A673 (cell line): ENCODE measurements at regions of chr3 and their contacts with region 1.

Region 1: DNA sequence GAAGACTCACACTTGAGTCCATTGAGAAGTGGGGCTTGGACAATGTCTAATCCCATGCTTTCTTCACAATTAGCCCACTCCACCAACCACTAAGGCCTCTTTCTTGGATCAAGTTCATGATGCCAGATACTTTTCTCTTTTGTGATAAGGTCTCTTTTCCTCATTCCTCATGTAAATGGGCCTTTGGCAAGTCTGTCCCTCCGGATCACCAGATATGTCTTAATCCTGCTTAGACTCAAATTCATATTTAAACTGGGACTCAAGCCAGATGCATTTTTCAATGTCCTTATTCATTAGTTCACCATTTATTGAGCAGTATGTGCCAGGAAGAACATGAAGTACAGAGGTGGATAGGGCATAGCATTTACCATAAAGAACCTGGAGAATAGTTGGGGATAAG is 671.1 kb downstream of the TBL1XR1 start:
- DNase-seq: peak; percentile 22
- H3K4me3 ChIP-seq: no peak overlapping the region
- H3K27ac ChIP-seq: no peak overlapping the region
- H3K4me1 ChIP-seq: peaks cover 12% of the 10 kb centered on the region
- H3K27me3 ChIP-seq: no peaks in the 10 kb centered on the region
- CTCF ChIP-seq: no peak

Region 2: GRCh38 chr3:176650478-176650877 is 124.3 kb after region 1 on chr3:
- CTCF ChIA-PET with region 1: interaction called, 12 read pairs
- POLR2A ChIA-PET with region 1: no interaction called
- intact Hi-C with region 1: no loop called
- DNase-seq: no peak
- H3K4me3 ChIP-seq: no peak overlapping the region
- H3K27ac ChIP-seq: no peak overlapping the region
- H3K4me1 ChIP-seq: no peaks in the 10 kb centered on the region
- H3K27me3 ChIP-seq: no peaks in the 10 kb centered on the region
- CTCF ChIP-seq: peak; percentile 42; the same call in 1 of the 2 replicates